ENCODE measurements at regions of chr16 and their contacts with region 1.

Region 1: GRCh38 chr16:65809627-65810026 is 556.9 kb upstream of the CDH5 start:
- DNase-seq: no peak
- H3K4me3 ChIP-seq: no peak overlapping the region
- H3K27ac ChIP-seq: no peak overlapping the region
- H3K4me1 ChIP-seq: no peaks in the 10 kb centered on the region
- H3K27me3 ChIP-seq: no peaks in the 10 kb centered on the region
- CTCF ChIP-seq: no peak
- POLR2A ChIP-seq: no peak

Region 2: DNA sequence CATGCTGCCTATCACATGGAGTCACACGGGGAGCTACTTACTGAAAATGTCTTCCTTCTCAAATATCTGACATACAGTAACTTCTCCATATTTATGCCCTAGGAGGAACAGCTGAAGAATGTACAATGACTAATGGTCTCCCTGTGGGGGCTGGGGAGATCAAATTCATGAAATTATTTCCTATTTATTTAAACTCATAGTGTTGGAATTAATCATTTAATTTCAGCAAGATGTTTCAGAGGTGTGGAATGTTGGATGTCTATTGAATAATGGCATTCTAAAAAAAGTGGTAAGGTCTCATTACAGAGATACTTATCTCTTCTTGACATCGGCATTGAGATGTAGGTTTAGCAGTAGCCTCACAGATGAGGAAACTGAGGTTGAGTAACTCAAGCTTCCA is 473.5 kb before region 1 on chr16:
- intact Hi-C with region 1: no loop called
- DNase-seq: no peak
- H3K4me3 ChIP-seq: no peak overlapping the region
- H3K27ac ChIP-seq: no peak overlapping the region
- H3K4me1 ChIP-seq: no peaks in the 10 kb centered on the region
- H3K27me3 ChIP-seq: no peaks in the 10 kb centered on the region
- CTCF ChIP-seq: no peak
- POLR2A ChIP-seq: no peak

Region 3: DNA sequence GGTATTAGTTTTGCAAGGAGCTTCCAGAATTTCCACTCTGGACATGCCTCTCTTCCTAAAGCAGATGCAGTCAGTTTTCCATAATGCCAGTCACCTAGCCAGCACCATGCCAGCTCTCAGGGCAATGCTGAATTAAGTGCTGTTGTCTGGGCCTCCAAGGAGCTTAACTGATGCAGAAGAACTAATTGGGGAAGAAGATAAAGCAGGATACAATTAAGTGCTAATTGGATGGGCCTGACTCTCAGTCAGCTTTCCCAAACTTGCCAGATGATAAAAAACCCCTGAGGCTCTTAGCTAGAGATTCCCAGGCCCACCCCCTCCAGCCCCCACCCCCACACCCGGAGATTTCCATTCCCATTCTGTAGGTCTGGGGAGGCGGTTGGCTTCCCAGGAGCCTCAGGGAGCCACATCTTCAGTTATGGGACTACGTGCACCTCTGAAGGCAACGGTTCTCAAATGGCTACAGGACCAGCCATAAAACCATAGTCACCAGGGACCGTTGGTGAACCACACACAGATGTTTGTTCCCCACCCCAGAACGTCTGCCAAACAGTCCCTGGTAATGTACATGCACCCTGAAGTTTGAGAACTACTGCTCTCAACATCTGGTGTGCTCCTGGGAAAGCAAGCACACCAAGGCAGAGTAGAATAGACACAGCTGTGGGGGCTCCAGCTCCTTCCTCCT is 57.8 kb after region 1 on chr16:
- intact Hi-C with region 1: no loop called
- DNase-seq: no peak
- H3K4me3 ChIP-seq: no peak overlapping the region
- H3K27ac ChIP-seq: no peak overlapping the region
- H3K4me1 ChIP-seq: no peaks in the 10 kb centered on the region
- H3K27me3 ChIP-seq: no peaks in the 10 kb centered on the region
- CTCF ChIP-seq: no peak
- POLR2A ChIP-seq: no peak

Region 4: GRCh38 chr16:67091906-67092566 is 1282.4 kb after region 1 on chr16:
- intact Hi-C with region 1: loop called (anchors 10 kb)
- DNase-seq: no peak
- H3K4me3 ChIP-seq: no peak overlapping the region
- H3K27ac ChIP-seq: no peak overlapping the region
- H3K4me1 ChIP-seq: peaks cover 5% of the 10 kb centered on the region
- H3K27me3 ChIP-seq: no peaks in the 10 kb centered on the region
- CTCF ChIP-seq: no peak
- POLR2A ChIP-seq: no peak